ENCODE measurements at regions of chr12 and their contacts with region 1.

Region 1: DNA sequence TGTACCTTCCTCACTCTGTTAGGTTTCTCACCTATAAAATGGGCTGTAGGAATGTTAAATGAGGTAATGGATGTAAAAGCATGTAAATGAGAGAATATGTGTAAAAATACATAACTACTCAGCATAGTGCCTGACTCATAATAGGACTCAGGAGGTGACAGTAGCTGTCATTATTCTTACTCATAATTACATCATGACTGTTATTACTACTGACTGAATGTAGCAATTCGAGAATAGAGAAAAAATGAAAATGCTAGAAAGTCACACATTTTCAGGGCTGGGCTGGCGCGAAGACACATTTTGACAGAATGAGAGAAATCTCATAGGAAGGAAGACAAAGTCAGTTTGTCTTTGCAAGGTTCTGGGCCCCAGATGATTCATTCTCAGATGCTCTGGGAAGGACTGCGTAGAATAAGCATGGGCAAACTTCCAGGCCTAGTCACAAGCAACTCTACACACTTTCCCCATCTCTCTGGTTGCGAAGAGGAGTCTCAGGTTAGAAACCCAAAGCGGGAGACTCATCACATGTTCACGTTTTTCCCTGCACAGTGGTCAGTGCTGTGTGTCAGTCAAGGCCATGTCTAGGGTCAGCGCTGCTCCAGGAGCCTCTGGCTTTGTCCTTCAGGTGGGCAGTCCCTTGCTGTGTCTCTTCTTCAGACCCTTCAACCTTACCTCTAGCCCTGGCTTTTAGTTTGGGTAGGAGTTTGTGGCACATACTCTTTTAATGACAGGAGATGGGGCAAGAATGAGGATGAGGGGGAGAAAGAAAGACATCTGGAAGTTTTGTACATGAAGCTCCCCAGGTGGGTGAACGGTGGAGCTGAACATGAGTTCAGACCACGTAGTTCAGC is 8.4 kb downstream of the GPRC5A start:
- DNase-seq: peak; percentile 91
- H3K4me3 Mint-ChIP-seq: no peak overlapping the region
- H3K27ac Mint-ChIP-seq: peak overlapping the region; percentile 90
- H3K4me1 Mint-ChIP-seq: peaks cover 31% of the 10 kb centered on the region
- H3K27me3 Mint-ChIP-seq: peaks cover 4% of the 10 kb centered on the region

Region 2: GRCh38 chr12:12716793-12717585 is 182.8 kb before region 1 on chr12 and contains the start of gene CDKN1B:
- CTCF ChIA-PET with region 1: no interaction called
- intact Hi-C with region 1: loop called (anchors 2 kb)
- DNase-seq: peak; percentile 90
- H3K4me3 Mint-ChIP-seq: peak within 1 kb of the TSS; percentile 98
- H3K27ac Mint-ChIP-seq: peak within 1 kb of the TSS; percentile 98
- H3K4me1 Mint-ChIP-seq: peaks cover 55% of the 10 kb centered on the region
- H3K27me3 Mint-ChIP-seq: no peaks in the 10 kb centered on the region
- total RNA-seq, gene CDKN1B: 35.9 to 39.1 TPM

Region 3: DNA sequence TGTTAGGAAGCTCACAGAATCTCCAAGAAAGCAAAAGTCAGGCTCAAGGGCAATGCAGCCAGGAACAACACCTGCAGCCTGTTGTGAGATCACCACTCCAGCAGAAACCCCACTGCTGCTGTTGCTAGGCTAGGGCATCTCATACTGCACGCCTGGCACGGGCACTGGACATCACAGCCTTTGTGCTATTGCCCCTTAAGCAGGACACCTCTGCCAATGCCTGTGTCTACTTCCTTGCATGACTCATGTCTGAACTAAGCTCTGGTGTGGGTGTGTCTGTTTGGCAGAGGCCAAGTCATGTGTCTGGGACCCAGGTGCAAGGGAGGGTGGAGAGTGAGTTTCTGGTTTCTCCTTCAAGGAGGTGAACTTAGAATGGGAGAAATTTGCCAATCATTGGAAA is 96.6 kb before region 1 on chr12:
- CTCF ChIA-PET with region 1: no interaction called
- intact Hi-C with region 1: loop called (anchors 1 kb)
- DNase-seq: peak; percentile 61
- H3K4me3 Mint-ChIP-seq: no peak overlapping the region
- H3K27ac Mint-ChIP-seq: no peak overlapping the region
- H3K4me1 Mint-ChIP-seq: peaks cover 53% of the 10 kb centered on the region
- H3K27me3 Mint-ChIP-seq: no peaks in the 10 kb centered on the region

Region 4: GRCh38 chr12:12846780-12847474 is 52.8 kb before region 1 on chr12:
- CTCF ChIA-PET with region 1: no interaction called
- intact Hi-C with region 1: loop called (anchors 2 kb)
- DNase-seq: peak; percentile 43
- H3K4me3 Mint-ChIP-seq: no peak overlapping the region
- H3K27ac Mint-ChIP-seq: peak overlapping the region; percentile 46
- H3K4me1 Mint-ChIP-seq: peaks cover 26% of the 10 kb centered on the region
- H3K27me3 Mint-ChIP-seq: no peaks in the 10 kb centered on the region

Region 5: DNA sequence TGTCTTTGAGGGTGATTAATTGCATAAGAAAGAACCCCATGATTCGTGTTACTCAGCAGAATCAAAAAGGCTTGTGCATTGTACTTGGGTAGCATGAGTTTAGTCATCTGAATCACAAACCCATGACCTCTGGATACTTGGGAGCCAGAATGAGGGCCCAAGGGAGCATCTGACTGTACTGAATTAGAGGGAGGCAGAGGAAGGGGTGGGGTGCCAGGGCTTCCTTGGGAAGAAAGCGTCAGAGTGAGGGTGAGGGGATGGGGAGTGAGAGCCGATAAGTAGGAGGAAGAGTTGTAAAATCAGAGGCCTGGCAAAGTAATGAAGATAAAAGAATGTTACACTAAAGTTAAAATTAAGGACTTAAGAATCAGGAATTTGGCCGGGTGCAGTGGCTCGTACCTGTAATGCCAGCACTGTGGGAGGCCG is 22.4 kb after region 1 on chr12:
- CTCF ChIA-PET with region 1: no interaction called
- intact Hi-C with region 1: no loop called
- DNase-seq: no peak
- H3K4me3 Mint-ChIP-seq: no peak overlapping the region
- H3K27ac Mint-ChIP-seq: no peak overlapping the region
- H3K4me1 Mint-ChIP-seq: no peaks in the 10 kb centered on the region
- H3K27me3 Mint-ChIP-seq: no peaks in the 10 kb centered on the region

Region 6: DNA sequence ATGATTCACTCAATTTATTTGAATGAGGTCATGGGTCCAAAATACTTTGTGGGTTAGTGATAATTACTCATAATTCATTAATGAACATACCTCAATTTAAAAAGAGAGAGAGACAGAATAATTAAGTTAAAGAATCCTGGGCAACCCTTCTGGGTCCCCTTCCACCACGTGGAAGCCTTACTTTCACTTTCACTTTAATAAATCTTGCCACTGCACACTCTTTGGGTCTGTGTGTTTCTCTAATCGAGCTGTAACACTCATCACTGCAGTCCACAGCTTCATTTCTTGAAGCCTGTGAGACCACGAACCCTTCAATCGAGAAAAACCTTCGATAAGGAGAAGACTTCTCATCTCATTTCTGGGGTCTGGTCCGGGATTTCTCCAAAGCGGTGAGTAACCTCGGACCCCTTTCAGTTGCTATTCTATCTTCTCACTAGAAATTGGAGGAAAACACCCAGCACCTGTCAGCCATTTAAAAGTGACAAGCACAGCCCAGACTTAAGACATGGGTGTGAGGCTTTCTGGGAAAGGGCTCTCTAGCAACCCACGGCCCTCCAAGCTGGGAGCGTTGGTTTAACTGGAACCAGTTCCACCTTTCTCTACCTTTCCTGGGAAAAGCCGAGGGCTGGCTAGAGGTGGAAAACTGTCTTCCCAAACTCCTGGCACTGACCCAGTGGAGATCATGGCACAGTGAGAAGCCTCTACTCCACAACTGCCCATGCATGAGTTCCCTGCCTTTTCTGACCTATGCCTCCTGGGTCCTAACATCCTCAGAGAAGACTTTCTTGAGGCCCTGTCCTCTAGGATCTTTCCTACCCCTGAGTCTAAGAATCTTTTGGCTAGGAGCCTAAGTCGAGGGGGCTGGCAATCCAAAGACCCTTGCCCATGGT is 1316.9 kb after region 1 on chr12:
- CTCF ChIA-PET with region 1: no interaction called
- intact Hi-C with region 1: loop called (anchors 1 kb)
- DNase-seq: no peak
- H3K4me3 Mint-ChIP-seq: no peak overlapping the region
- H3K27ac Mint-ChIP-seq: peak overlapping the region; percentile 70
- H3K4me1 Mint-ChIP-seq: peaks cover 24% of the 10 kb centered on the region
- H3K27me3 Mint-ChIP-seq: no peaks in the 10 kb centered on the region

Measured in activated naive CD4-positive, alpha-beta T cell treated with anti-CD3 and anti-CD28 coated beads for 36 hours (primary cell).